ENCODE measurements at regions of chr1 and their contacts with region 1.

Region 1: GRCh38 chr1:156060937-156061636 is at the start of gene RAB25:
- DNase-seq: peak; percentile 80
- ATAC-seq: peak; percentile 83
- H3K4me3 Mint-ChIP-seq: peak within 1 kb of the TSS; percentile 90
- H3K27ac Mint-ChIP-seq: peak within 1 kb of the TSS; percentile 98
- H3K4me1 Mint-ChIP-seq: peaks cover 37% of the 10 kb centered on the region
- H3K27me3 Mint-ChIP-seq: no peaks in the 10 kb centered on the region
- CTCF ChIP-seq: no peak
- total RNA-seq, gene RAB25: 61.9 to 82.8 TPM (median 82.5 TPM) in 3 replicates

Region 2: DNA sequence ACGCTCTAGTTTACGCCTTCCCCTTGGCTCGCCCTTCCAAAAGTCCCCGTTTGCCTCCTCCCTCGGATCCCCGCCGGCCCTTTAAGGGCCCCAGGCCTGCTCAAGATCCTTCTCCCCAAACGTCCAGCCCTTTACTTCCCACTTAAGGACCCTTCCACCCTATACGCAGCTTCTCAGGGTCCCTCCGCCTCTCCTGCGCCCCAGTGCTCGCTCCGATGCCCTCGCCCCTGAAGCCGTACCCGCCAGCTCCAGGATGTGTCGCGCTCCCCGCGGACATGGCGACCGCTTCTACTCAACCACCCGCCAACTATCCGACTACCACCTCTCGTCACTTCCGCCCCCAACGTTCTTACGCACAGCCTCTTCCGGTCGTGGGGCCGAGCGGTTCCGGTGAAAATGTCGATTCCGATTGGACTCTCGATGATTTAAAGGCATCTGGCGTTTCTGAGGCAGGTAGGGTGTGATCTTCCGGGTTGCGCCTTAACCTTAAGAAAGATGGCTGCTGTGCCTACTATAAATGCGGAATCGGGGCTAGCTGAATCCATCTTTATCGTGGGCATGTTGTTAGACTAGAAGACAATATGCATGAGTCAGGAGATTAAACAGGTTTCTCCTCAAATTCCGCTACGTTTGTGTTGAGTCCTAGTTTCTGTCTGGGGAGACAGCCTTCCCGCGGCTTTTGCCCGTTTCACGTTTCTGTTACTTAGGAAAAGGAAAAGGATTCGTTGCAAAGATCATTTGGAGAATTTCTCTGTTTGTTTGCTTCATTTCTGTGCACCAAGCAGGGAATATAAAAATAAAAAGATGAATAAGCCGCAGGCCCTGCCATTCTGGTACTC is 126.8 kb before region 1 on chr1 and contains the start of gene KHDC4:
- CTCF ChIA-PET with region 1: interaction called, 41 read pairs
- POLR2A ChIA-PET with region 1: interaction called, 5 read pairs
- DNase-seq: peak; percentile 88
- ATAC-seq: peak; percentile 92
- H3K4me3 Mint-ChIP-seq: no peak within 1 kb of the TSS
- H3K27ac Mint-ChIP-seq: no peak within 1 kb of the TSS
- H3K4me1 Mint-ChIP-seq: peaks cover 20% of the 10 kb centered on the region
- H3K27me3 Mint-ChIP-seq: no peaks in the 10 kb centered on the region
- CTCF ChIP-seq: no peak
- total RNA-seq, gene KHDC4: 46.0 to 64.4 TPM (median 59.8 TPM) in 3 replicates

Region 3: GRCh38 chr1:155989242-155990004 is 71.7 kb before region 1 on chr1:
- CTCF ChIA-PET with region 1: interaction called, 29 read pairs
- POLR2A ChIA-PET with region 1: no interaction called
- DNase-seq: peak; percentile 82
- ATAC-seq: peak; percentile 84
- H3K4me3 Mint-ChIP-seq: no peak overlapping the region
- H3K27ac Mint-ChIP-seq: no peak overlapping the region
- H3K4me1 Mint-ChIP-seq: peaks cover 27% of the 10 kb centered on the region
- H3K27me3 Mint-ChIP-seq: no peaks in the 10 kb centered on the region; the same call in 1 of the 2 replicates
- CTCF ChIP-seq: peak; percentile 99

Region 4: GRCh38 chr1:156025877-156026276 is 35.2 kb before region 1 on chr1:
- CTCF ChIA-PET with region 1: interaction called, 74 read pairs
- POLR2A ChIA-PET with region 1: interaction called, 3 read pairs
- DNase-seq: peak; percentile 72
- ATAC-seq: peak; percentile 99
- H3K4me3 Mint-ChIP-seq: no peak overlapping the region
- H3K27ac Mint-ChIP-seq: no peak overlapping the region
- H3K4me1 Mint-ChIP-seq: peaks cover 5% of the 10 kb centered on the region
- H3K27me3 Mint-ChIP-seq: peaks cover 28% of the 10 kb centered on the region
- CTCF ChIP-seq: no peak

Region 5: GRCh38 chr1:156082309-156083091 is 21.4 kb after region 1 on chr1 and contains the start of gene MEX3A:
- CTCF ChIA-PET with region 1: interaction called, 11 read pairs
- POLR2A ChIA-PET with region 1: interaction called, 12 read pairs
- DNase-seq: peak; percentile 99
- ATAC-seq: peak; percentile 73
- H3K4me3 Mint-ChIP-seq: peak within 1 kb of the TSS; percentile 97
- H3K27ac Mint-ChIP-seq: peak within 1 kb of the TSS; percentile 93
- H3K4me1 Mint-ChIP-seq: peaks cover 65% of the 10 kb centered on the region
- H3K27me3 Mint-ChIP-seq: no peaks in the 10 kb centered on the region
- CTCF ChIP-seq: no peak
- total RNA-seq, gene MEX3A: 66.3 to 79.1 TPM (median 70.6 TPM) in 3 replicates

Region 6: GRCh38 chr1:156136970-156137483 is 75.9 kb after region 1 on chr1:
- CTCF ChIA-PET with region 1: interaction called, 10 read pairs
- POLR2A ChIA-PET with region 1: no interaction called
- DNase-seq: peak; percentile 55
- ATAC-seq: peak; percentile 24; the same call in 1 of the 2 replicates
- H3K4me3 Mint-ChIP-seq: no peak overlapping the region
- H3K27ac Mint-ChIP-seq: no peak overlapping the region
- H3K4me1 Mint-ChIP-seq: peaks cover 9% of the 10 kb centered on the region
- H3K27me3 Mint-ChIP-seq: no peaks in the 10 kb centered on the region
- CTCF ChIP-seq: no peak

Measured in WTC11 (cell line).